Endothelial cell of umbilical vein (primary cell): ENCODE measurements at regions of chr15 and their contacts with region 1.

Region 1: GRCh38 chr15:52227456-52227855 is 36.3 kb upstream of the GNB5 start:
- DNase-seq: peak; percentile 82
- H3K4me3 ChIP-seq: no peak overlapping the region
- H3K27ac ChIP-seq: no peak overlapping the region
- H3K4me1 ChIP-seq: no peaks in the 10 kb centered on the region
- H3K27me3 ChIP-seq: no peaks in the 10 kb centered on the region
- CTCF ChIP-seq: peak; percentile 72 to 76
- POLR2A ChIP-seq: no peak

Region 2: GRCh38 chr15:51888593-51889195 is 338.8 kb before region 1 on chr15:
- CTCF ChIA-PET with region 1: interaction called, 14 read pairs
- POLR2A ChIA-PET with region 1: no interaction called
- dilution Hi-C with region 1: no loop called
- intact Hi-C with region 1: no loop called
- DNase-seq: peak; percentile 43
- H3K4me3 ChIP-seq: no peak overlapping the region
- H3K27ac ChIP-seq: no peak overlapping the region
- H3K4me1 ChIP-seq: peaks cover 9% of the 10 kb centered on the region
- H3K27me3 ChIP-seq: no peaks in the 10 kb centered on the region
- CTCF ChIP-seq: peak; percentile 44 to 48
- POLR2A ChIP-seq: no peak

Region 3: DNA sequence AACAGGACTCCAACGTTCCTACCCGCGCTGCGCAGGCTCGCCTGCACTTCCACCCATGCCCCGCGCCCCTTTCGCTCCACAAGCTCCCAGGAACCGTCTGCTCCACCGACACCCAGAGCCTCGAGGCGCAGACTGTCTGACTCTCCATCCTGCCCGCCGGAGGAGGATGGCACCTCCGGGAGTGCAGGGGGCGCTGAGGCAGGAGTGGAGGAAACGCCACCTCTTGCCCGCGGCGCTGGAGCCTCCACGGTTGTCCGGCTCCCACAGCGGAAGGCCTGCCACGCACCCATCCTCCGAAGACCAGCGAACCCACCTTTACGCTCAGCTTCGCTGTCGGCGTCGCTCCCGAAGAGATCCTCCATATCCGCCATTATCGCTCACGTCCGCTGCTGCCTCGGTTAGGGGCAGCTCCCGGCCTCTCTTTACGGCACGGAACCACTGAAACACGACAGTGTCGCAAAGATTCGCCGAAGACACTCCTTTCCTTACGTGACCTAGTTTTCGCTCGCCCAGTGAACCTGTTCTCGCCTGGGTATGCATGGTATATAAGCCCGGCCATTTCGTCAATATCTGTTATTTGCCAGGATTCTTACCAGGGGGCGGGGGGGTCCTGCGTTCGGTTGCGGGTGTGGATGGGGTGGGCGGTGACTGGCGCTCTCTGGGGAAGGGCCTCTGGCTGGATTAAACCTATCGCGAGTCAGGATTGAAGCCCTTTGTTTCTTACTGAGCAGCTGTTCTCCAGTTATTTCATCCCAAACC is 255.9 kb before region 1 on chr15 and contains the start of gene LEO1:
- CTCF ChIA-PET with region 1: interaction called, 11 read pairs
- POLR2A ChIA-PET with region 1: no interaction called
- dilution Hi-C with region 1: no loop called
- intact Hi-C with region 1: no loop called
- DNase-seq: peak; percentile 97
- H3K4me3 ChIP-seq: peak within 1 kb of the TSS; percentile 54 to 81 (median 61)
- H3K27ac ChIP-seq: peak within 1 kb of the TSS; percentile 68
- H3K4me1 ChIP-seq: peaks cover 12% of the 10 kb centered on the region
- H3K27me3 ChIP-seq: no peaks in the 10 kb centered on the region
- CTCF ChIP-seq: peak in 1 of 2 donors; percentile 42
- POLR2A ChIP-seq: peak; percentile 92
- total RNA-seq, gene LEO1: 22.6 and 28.0 TPM in 2 replicates

Region 4: GRCh38 chr15:52179278-52180195 is 47.9 kb before region 1 on chr15:
- CTCF ChIA-PET with region 1: interaction called, 93 read pairs
- POLR2A ChIA-PET with region 1: no interaction called
- dilution Hi-C with region 1: no loop called
- intact Hi-C with region 1: loop called (anchors 1 kb)
- DNase-seq: peak; percentile 82
- H3K4me3 ChIP-seq: peak overlapping the region; percentile 18 to 85 (median 70)
- H3K27ac ChIP-seq: peak overlapping the region; percentile 58
- H3K4me1 ChIP-seq: peaks cover 9% of the 10 kb centered on the region
- H3K27me3 ChIP-seq: no peaks in the 10 kb centered on the region
- CTCF ChIP-seq: no peak
- POLR2A ChIP-seq: peak; percentile 59

Region 5: DNA sequence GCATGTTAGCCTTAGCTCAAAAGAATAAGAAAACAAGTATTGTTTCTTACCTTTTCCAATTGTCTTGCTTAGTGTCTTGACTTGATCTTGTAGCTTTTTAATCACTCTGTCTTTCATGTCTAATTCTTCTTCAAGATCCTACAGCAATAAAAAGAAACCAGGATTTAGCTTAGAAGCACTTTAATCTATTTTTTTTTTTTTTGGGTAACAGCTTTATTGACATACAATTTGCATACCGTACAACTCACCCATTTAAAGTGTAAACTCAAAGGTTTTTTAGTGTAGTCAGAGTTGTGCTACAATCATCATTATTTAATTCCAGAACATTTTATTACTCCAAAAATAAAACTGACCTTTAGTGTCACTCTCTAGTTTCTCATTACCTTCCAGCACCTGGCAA is 12.9 kb before region 1 on chr15:
- CTCF ChIA-PET with region 1: interaction called, 12 read pairs
- POLR2A ChIA-PET with region 1: no interaction called
- dilution Hi-C with region 1: no loop called
- intact Hi-C with region 1: no loop called
- DNase-seq: no peak
- H3K4me3 ChIP-seq: no peak overlapping the region
- H3K27ac ChIP-seq: no peak overlapping the region
- H3K4me1 ChIP-seq: no peaks in the 10 kb centered on the region
- H3K27me3 ChIP-seq: no peaks in the 10 kb centered on the region
- CTCF ChIP-seq: no peak
- POLR2A ChIP-seq: no peak

Region 6: GRCh38 chr15:52251144-52251860 is 23.8 kb after region 1 on chr15:
- CTCF ChIA-PET with region 1: interaction called, 16 read pairs
- POLR2A ChIA-PET with region 1: no interaction called
- dilution Hi-C with region 1: no loop called
- intact Hi-C with region 1: no loop called
- DNase-seq: no peak
- H3K4me3 ChIP-seq: no peak overlapping the region
- H3K27ac ChIP-seq: no peak overlapping the region
- H3K4me1 ChIP-seq: peaks cover 30% of the 10 kb centered on the region
- H3K27me3 ChIP-seq: no peaks in the 10 kb centered on the region
- CTCF ChIP-seq: no peak
- POLR2A ChIP-seq: no peak

Region 7: GRCh38 chr15:52392008-52392687 is 164.7 kb after region 1 on chr15:
- CTCF ChIA-PET with region 1: no interaction called
- POLR2A ChIA-PET with region 1: no interaction called
- dilution Hi-C with region 1: no loop called
- intact Hi-C with region 1: no loop called
- DNase-seq: no peak
- H3K4me3 ChIP-seq: no peak overlapping the region
- H3K27ac ChIP-seq: no peak overlapping the region
- H3K4me1 ChIP-seq: no peaks in the 10 kb centered on the region
- H3K27me3 ChIP-seq: no peaks in the 10 kb centered on the region
- CTCF ChIP-seq: no peak
- POLR2A ChIP-seq: no peak

Region 8: DNA sequence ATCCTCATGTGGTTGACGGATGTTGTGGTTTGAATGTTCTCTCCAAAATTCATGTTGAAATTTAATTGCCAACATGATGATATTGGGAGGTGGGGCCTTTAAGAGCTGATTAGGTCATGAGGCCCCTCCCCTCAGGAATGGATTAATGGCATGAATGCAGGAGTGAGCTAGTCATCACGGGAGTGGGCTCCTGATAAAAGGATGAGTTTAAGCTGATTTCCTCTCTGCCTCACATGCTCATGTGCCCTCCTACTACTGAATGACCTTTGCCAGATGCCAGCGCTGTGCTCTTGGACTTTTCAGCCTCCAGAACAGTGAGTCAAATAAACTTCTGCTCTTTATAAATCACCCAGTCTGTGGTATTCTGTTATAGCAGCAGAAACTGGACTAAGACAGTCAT is 190.1 kb after region 1 on chr15:
- CTCF ChIA-PET with region 1: no interaction called
- POLR2A ChIA-PET with region 1: no interaction called
- dilution Hi-C with region 1: no loop called
- intact Hi-C with region 1: no loop called
- DNase-seq: peak; percentile 90
- H3K4me3 ChIP-seq: peak overlapping the region in 2 of 3 experiments; percentile 24 to 59
- H3K27ac ChIP-seq: peak overlapping the region; percentile 97
- H3K4me1 ChIP-seq: peaks cover 67% of the 10 kb centered on the region
- H3K27me3 ChIP-seq: no peaks in the 10 kb centered on the region
- CTCF ChIP-seq: no peak
- POLR2A ChIP-seq: peak; percentile 38